ENCODE measurements at regions of chr7 and their contacts with region 1.

Region 1: DNA sequence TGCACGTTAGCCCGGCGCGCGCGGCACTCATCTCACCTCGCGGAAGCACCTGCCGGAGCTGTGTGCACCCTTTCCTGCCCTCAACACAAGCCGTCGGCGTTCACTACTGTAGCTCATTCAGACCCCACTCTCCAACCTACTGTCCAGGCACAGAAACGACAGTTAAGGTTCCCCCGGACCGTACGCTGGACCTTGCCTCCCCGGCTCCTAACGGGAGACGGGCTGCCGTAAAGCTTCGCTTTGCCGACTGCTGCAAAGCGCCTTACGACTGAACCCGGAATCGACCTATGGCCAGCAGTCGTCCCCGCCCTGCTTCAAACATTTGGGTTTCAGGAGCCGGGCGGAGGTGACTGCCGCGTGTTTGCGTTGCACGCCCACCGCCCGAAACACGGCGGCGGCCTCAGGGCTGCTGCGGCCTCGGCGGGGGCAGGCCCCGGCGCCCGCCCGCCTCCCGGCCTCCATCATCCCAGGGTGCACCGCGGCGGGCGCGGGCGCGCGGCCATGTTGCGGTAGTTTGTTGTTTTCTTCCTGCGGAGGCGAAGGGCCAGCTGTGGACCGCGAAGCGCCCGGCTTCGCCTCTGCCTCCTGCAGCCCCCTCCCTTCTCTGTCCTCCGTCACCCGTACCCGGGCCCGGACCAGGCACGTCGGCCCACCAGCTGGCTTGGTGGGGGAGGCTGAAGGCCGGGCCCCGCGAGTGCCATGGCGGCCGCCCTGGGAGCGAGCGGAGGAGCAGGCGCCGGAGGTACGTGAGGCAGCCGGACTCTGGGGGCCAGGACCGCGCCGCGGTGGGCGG is at the start of gene RBM33:
- DNase-seq: peak; percentile 79
- H3K4me3 Mint-ChIP-seq: peak within 1 kb of the TSS; percentile 83
- H3K27ac Mint-ChIP-seq: peak within 1 kb of the TSS; percentile 91
- H3K4me1 Mint-ChIP-seq: peaks cover 19% of the 10 kb centered on the region
- H3K27me3 Mint-ChIP-seq: no peaks in the 10 kb centered on the region
- CTCF ChIP-seq: no peak
- total RNA-seq, gene RBM33: 82.9 and 85.3 TPM in 2 replicates

Region 2: GRCh38 chr7:155453296-155454165 is 190.8 kb before region 1 on chr7:
- CTCF ChIA-PET with region 1: interaction called, 13 read pairs
- intact Hi-C with region 1: no loop called
- DNase-seq: no peak
- H3K4me3 Mint-ChIP-seq: no peak overlapping the region
- H3K27ac Mint-ChIP-seq: no peak overlapping the region
- H3K4me1 Mint-ChIP-seq: peaks cover 8% of the 10 kb centered on the region
- H3K27me3 Mint-ChIP-seq: peaks cover 89% of the 10 kb centered on the region
- CTCF ChIP-seq: no peak

Measured in Calu3 (cell line).